ENCODE measurements at regions of chr15 and their contacts with region 1.

Region 1: DNA sequence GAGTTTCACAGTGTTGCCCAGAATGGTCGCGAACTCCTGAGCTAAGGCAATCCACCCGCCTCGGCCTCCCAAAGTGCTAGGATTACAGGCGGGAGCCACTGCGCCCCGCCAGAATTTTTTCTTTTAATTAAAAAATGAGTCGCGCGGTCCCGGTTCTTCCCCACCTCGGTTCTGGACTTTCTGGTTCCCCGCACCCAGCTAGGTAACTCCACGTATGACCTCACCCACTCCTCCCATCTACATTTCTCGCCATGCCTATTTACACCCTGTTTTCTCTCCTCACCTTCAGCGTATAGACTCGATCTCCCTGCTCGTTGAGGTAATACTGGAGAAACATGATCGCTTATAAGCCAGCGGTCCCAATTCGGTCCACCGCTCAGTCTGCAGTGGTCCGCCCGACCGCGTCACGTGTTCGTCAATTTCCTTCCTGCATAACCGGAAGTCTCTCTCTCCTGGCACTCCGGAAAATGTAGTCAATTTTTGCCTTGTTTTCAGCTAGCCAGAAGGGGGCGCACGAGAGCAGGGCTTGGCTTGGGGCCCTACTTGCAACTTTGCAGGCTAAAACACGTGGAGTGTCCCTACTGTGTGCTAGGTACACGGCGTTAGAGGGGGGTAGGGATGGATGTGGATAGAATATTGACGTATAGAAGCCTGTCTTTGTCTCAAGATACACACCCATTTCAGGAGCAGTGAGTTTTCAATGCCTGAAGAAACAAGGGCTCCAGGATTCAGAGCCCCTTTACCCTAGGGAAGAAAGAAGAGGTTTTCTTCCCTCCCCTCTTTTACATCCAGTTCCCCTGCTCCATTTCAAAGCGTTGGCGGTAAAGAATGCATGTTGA is at the starts of genes NOP10 and NUTM1:
- DNase-seq: peak; percentile 89
- ATAC-seq: peak; percentile 90
- H3K4me3 Mint-ChIP-seq: no peak within 1 kb of the TSS
- H3K27ac Mint-ChIP-seq: peak within 1 kb of the TSS; percentile 74
- H3K4me1 Mint-ChIP-seq: peaks cover 25% of the 10 kb centered on the region
- H3K27me3 Mint-ChIP-seq: no peaks in the 10 kb centered on the region
- CTCF ChIP-seq: peak; percentile 57
- total RNA-seq, gene NOP10: 116 and 130 TPM in 2 replicates
- total RNA-seq, gene NUTM1: not detected in 2 replicates

Region 2: GRCh38 chr15:34223904-34224596 is 118.9 kb before region 1 on chr15:
- CTCF ChIA-PET with region 1: no interaction called
- POLR2A ChIA-PET with region 1: interaction called, 11 read pairs
- intact Hi-C with region 1: loop called (anchors 1 kb)
- DNase-seq: no peak
- ATAC-seq: peak; percentile 7
- H3K4me3 Mint-ChIP-seq: peak overlapping the region; percentile 92
- H3K27ac Mint-ChIP-seq: peak overlapping the region; percentile 96
- H3K4me1 Mint-ChIP-seq: peaks cover 27% of the 10 kb centered on the region
- H3K27me3 Mint-ChIP-seq: peaks cover 1% of the 10 kb centered on the region
- CTCF ChIP-seq: no peak

Region 3: GRCh38 chr15:34241372-34242330 is 101.3 kb before region 1 on chr15:
- CTCF ChIA-PET with region 1: interaction called, 12 read pairs
- POLR2A ChIA-PET with region 1: interaction called, 10 read pairs
- intact Hi-C with region 1: loop called (anchors 1 kb)
- DNase-seq: no peak
- ATAC-seq: peak; percentile 94
- H3K4me3 Mint-ChIP-seq: no peak overlapping the region
- H3K27ac Mint-ChIP-seq: no peak overlapping the region
- H3K4me1 Mint-ChIP-seq: peaks cover 4% of the 10 kb centered on the region
- H3K27me3 Mint-ChIP-seq: no peaks in the 10 kb centered on the region
- CTCF ChIP-seq: peak; percentile 53

Region 4: GRCh38 chr15:34318277-34319079 is 24.5 kb before region 1 on chr15:
- CTCF ChIA-PET with region 1: interaction called, 3 read pairs
- POLR2A ChIA-PET with region 1: interaction called, 21 read pairs
- intact Hi-C with region 1: no loop called
- DNase-seq: no peak
- ATAC-seq: peak; percentile 83
- H3K4me3 Mint-ChIP-seq: peak overlapping the region; percentile 94
- H3K27ac Mint-ChIP-seq: peak overlapping the region; percentile 91
- H3K4me1 Mint-ChIP-seq: peaks cover 74% of the 10 kb centered on the region
- H3K27me3 Mint-ChIP-seq: no peaks in the 10 kb centered on the region
- CTCF ChIP-seq: no peak

Region 5: DNA sequence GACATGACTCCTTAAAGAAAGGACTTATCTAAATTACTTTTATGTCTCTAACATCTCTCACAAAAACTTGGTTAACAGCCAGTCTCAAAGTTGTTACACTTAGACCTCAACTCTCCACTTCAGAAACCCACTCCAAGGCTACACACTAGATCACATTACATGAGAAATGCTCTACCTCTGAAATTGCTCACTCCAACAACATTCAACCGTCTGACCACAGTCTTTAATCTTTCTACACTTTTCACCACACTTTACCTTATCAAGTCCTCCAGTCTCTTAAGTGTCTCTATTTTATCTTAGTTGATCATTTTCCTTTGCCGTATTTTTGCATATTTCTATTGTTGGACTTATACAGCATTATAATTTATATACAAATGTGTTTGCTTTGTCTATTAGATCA is 11.1 kb before region 1 on chr15:
- CTCF ChIA-PET with region 1: interaction called, 9 read pairs
- POLR2A ChIA-PET with region 1: interaction called, 113 read pairs
- intact Hi-C with region 1: loop called (anchors 2 kb)
- DNase-seq: no peak
- ATAC-seq: no peak
- H3K4me3 Mint-ChIP-seq: peak overlapping the region; percentile 2
- H3K27ac Mint-ChIP-seq: peak overlapping the region; percentile 99
- H3K4me1 Mint-ChIP-seq: peaks cover 91% of the 10 kb centered on the region
- H3K27me3 Mint-ChIP-seq: no peaks in the 10 kb centered on the region
- CTCF ChIP-seq: no peak

Region 6: DNA sequence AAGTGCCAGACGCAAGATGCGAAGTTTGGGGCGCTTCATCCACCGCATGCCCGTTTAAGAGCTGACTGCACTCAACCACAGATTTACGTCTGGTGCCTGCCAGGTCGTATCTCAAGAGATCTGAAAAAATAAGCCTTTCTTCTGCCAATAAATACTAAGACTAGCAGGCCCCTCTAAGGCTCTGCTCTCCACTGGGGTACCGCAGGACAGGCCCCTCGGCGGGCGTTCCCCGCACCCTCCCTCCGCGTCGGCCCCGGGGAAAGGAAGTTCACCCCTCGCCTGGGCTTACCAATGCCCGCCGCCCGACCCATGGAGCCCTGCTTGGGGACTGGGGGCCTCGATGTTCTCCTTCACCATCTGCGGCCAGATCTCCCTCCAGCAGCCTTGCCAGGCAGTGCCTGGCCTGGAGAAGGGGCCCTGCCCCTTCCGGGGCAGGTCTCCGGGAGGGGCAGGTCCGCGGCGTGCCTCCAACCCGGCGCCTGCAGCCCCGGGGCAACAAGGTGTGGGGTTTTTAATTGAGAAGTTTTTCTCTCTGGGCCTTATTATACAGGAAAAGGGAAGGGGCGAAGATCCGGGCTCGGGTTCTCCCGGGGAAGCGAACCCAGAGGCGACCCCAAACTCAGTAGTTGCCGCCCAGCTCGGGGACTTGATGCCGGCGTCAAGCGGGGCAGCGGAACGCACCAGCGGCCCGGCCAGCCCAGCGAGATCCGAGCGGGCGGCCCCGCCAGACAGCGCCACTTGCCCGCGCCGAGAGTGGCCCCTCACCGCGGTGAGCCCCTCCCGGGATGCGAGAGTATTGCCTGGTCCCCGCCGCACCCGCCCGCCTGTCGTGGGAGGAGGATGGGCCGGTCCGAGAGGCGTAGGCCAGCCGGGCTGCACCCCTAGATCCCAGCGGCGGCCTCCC is 239.8 kb after region 1 on chr15:
- CTCF ChIA-PET with region 1: interaction called, 10 read pairs
- POLR2A ChIA-PET with region 1: no interaction called
- intact Hi-C with region 1: loop called (anchors 1 kb)
- DNase-seq: peak; percentile 32
- ATAC-seq: peak; percentile 53
- H3K4me3 Mint-ChIP-seq: peak overlapping the region; percentile 89
- H3K27ac Mint-ChIP-seq: peak overlapping the region; percentile 41
- H3K4me1 Mint-ChIP-seq: peaks cover 33% of the 10 kb centered on the region
- H3K27me3 Mint-ChIP-seq: no peaks in the 10 kb centered on the region
- CTCF ChIP-seq: no peak

Measured in activated B cell treated with CpG ODN at 0.5 μM for 24 hours (primary cell).